ENCODE measurements at regions of chr17 and their contacts with region 1.

Region 1: GRCh38 chr17:21019976-21020586 is 22.7 kb downstream of the USP22 start:
- DNase-seq: peak in 6 of 9 experiments; percentile 26 to 68 (median 61)
- ATAC-seq: peak; percentile 81
- H3K4me3 ChIP-seq: no peak overlapping the region
- H3K4me3 Mint-ChIP-seq: no peak overlapping the region
- H3K27ac ChIP-seq: no peak overlapping the region
- H3K27ac Mint-ChIP-seq: peak overlapping the region; percentile 18
- H3K4me1 ChIP-seq: peaks cover 21% of the 10 kb centered on the region
- H3K4me1 Mint-ChIP-seq: peaks cover 45% of the 10 kb centered on the region
- H3K27me3 ChIP-seq: no peaks in the 10 kb centered on the region
- H3K27me3 Mint-ChIP-seq: no peaks in the 10 kb centered on the region
- CTCF ChIP-seq: no peak

Region 2: GRCh38 chr17:21098934-21099689 is 79.0 kb after region 1 on chr17:
- CTCF ChIA-PET with region 1: interaction called, 4 read pairs
- POLR2A ChIA-PET with region 1: no interaction called
- intact Hi-C with region 1: loop called in 1 of 2 experiments (anchors 1 kb)
- DNase-seq: peak; percentile 22 to 85 (median 62)
- ATAC-seq: peak; percentile 97
- H3K4me3 ChIP-seq: peak overlapping the region; percentile 53 to 66
- H3K4me3 Mint-ChIP-seq: peak overlapping the region; percentile 93
- H3K27ac ChIP-seq: no peak overlapping the region
- H3K27ac Mint-ChIP-seq: no peak overlapping the region
- H3K4me1 ChIP-seq: peaks cover 12% of the 10 kb centered on the region
- H3K4me1 Mint-ChIP-seq: peaks cover 11% of the 10 kb centered on the region
- H3K27me3 ChIP-seq: no peaks in the 10 kb centered on the region
- H3K27me3 Mint-ChIP-seq: peaks cover 5% of the 10 kb centered on the region
- CTCF ChIP-seq: no peak